ENCODE measurements at regions of chr13 and their contacts with region 1.

Region 1: DNA sequence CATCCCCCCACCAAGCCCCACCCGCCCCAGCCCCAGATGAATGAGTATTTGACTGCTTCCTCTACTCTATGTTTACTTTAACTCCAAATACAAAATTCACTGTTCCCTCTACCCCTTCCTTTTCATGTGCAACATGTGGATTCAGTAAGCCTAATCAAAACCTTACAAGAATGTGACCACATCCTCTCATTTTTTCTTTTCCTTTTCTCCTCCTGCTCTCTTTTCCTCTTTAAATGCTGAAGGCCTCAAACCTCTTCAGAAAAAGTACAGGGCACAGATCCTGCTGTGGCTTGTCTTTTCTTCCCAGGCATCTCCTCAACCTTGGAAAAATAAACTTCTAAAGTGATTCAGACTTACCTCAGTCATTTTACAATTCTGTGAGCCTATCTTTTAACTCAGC is 119.0 kb downstream of the MYCBP2 start:
- DNase-seq: peak; percentile 10
- ATAC-seq: peak; percentile 60
- H3K4me3 ChIP-seq: no peak overlapping the region
- H3K27ac ChIP-seq: peak overlapping the region; percentile 67
- H3K4me1 ChIP-seq: peaks cover 8% of the 10 kb centered on the region; the same call in 1 of the 2 replicates
- H3K27me3 ChIP-seq: no peaks in the 10 kb centered on the region
- CTCF ChIP-seq: no peak

Region 2: DNA sequence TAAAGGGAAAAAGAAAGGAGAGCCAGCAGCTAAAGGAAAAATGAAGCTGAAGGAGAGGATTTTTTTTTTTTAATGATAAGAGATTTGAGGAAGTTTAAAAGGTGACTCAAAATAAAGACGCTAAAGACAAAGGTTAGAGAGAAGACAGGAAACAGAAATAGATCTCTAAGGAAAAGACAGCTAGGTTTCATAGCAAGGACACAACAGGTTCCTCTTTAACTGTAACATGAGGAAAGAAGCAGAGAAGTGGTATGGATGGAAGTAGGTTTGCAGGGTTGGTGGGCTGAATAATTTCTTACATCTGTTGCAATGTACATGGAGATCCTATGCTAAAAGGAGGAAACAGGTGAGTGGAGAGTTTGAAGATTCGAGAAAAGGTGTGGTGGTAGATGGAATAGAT is 11.5 kb after region 1 on chr13:
- CTCF ChIA-PET with region 1: no interaction called
- POLR2A ChIA-PET with region 1: interaction called, 11 read pairs
- intact Hi-C with region 1: no loop called
- DNase-seq: no peak
- ATAC-seq: no peak
- H3K4me3 ChIP-seq: no peak overlapping the region
- H3K27ac ChIP-seq: no peak overlapping the region
- H3K4me1 ChIP-seq: no peaks in the 10 kb centered on the region
- H3K27me3 ChIP-seq: no peaks in the 10 kb centered on the region
- CTCF ChIP-seq: no peak

Measured in PC-3 (cell line).